SK-N-SH (cell line): ENCODE measurements at regions of chr1 and their contacts with region 1.

Region 1: GRCh38 chr1:226547754-226548191 is 791 bp upstream of the STUM start:
- DNase-seq: peak; percentile 87
- H3K4me3 ChIP-seq: peak overlapping the region in 1 of 2 experiments; percentile 39; a peak in 1 of 4 replicates
- H3K27ac ChIP-seq: no peak overlapping the region
- H3K4me1 ChIP-seq: peaks cover 10 to 24% of the 10 kb centered on the region in 2 experiments; a peak in 1 of 4 replicates
- H3K27me3 ChIP-seq: peaks cover 26% of the 10 kb centered on the region
- CTCF ChIP-seq: peak; percentile 91
- EP300 ChIP-seq: no peak
- RAD21 ChIP-seq: peak; percentile 89

Region 2: GRCh38 chr1:226482975-226483700 is 64.6 kb before region 1 on chr1:
- CTCF ChIA-PET with region 1: interaction called, 10 read pairs
- POLR2A ChIA-PET with region 1: no interaction called
- DNase-seq: peak; percentile 65
- H3K4me3 ChIP-seq: no peak overlapping the region
- H3K27ac ChIP-seq: no peak overlapping the region; a peak in 1 of 4 replicates
- H3K4me1 ChIP-seq: peaks cover 0 to 15% of the 10 kb centered on the region in 2 experiments; a peak in 1 of 4 replicates
- H3K27me3 ChIP-seq: peaks cover 11% of the 10 kb centered on the region; the same call in 1 of the 2 replicates
- CTCF ChIP-seq: no peak
- EP300 ChIP-seq: peak in 1 of 2 experiments; percentile 20; a peak in 1 of 4 replicates
- RAD21 ChIP-seq: no peak

Region 3: DNA sequence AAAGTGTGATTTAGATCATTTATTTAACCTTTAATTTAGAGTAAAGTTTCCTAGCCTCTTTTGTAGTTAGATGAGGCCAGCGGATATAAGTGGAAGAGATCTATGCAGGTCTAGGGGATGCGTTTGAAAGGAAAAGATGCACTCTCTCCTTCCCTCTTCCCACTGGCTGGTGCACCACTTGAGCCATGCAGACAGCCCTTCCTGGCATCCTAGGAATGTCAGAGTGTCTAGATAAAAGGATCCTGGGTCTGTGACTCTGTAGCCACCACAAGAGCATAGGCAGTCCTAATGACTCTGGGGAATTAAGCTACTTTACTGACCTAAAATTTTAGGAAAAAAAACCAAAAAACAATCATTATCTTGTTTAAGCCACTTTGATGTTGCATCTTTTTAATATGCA is 15.2 kb before region 1 on chr1:
- CTCF ChIA-PET with region 1: interaction called, 50 read pairs
- POLR2A ChIA-PET with region 1: no interaction called
- DNase-seq: no peak
- H3K4me3 ChIP-seq: no peak overlapping the region
- H3K27ac ChIP-seq: no peak overlapping the region
- H3K4me1 ChIP-seq: no peaks in the 10 kb centered on the region
- H3K27me3 ChIP-seq: peaks cover 9% of the 10 kb centered on the region; the same call in 1 of the 2 replicates
- CTCF ChIP-seq: no peak
- EP300 ChIP-seq: no peak
- RAD21 ChIP-seq: no peak

Region 4: GRCh38 chr1:226581645-226582330 is 34.0 kb after region 1 on chr1:
- CTCF ChIA-PET with region 1: interaction called, 12 read pairs
- POLR2A ChIA-PET with region 1: no interaction called
- DNase-seq: no peak
- H3K4me3 ChIP-seq: no peak overlapping the region
- H3K27ac ChIP-seq: no peak overlapping the region
- H3K4me1 ChIP-seq: no peaks in the 10 kb centered on the region
- H3K27me3 ChIP-seq: no peaks in the 10 kb centered on the region; the same call in 1 of the 2 replicates
- CTCF ChIP-seq: no peak
- EP300 ChIP-seq: no peak
- RAD21 ChIP-seq: no peak

Region 5: DNA sequence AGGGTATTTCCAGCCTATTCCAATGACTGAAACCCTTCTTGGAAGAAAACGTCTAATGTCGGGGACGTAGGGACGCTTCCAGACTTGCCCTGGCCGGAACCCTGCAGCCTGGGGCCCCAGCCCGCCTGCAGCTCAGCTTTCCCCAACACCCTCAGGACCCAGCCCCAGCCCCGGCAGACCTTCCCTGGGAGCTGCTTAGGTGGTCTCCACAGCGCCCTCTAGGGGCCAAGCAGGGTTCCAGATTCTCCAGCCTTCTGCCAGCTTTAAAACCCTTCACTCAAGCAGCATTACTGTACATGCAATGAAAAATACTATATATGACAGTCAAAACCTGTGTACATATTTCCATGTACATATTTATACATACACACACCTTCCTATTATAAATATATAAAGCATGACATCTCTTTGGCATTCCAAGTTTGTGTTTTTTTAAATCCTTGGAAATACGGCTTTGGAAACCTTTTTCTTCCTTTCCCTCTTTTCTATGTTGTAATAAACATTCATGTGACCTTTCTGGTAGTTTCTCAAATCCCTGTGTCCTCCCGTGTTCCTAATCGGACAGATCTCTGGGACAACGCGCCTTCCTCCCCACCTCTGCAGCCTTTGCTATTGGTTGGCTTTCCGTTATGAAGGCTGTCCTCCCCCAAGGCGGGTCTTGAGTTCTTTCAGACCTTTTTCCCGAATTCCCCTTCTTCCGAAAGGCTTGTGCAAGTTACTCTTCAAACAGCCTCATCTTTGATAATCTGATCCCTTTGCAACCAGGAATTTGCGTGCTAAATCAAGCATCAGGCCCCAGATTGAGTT is 61.1 kb after region 1 on chr1:
- CTCF ChIA-PET with region 1: interaction called, 49 read pairs
- POLR2A ChIA-PET with region 1: no interaction called
- DNase-seq: peak; percentile 84
- H3K4me3 ChIP-seq: no peak overlapping the region; a peak in 1 of 4 replicates
- H3K27ac ChIP-seq: no peak overlapping the region
- H3K4me1 ChIP-seq: no peaks in the 10 kb centered on the region; a peak in 1 of 4 replicates
- H3K27me3 ChIP-seq: no peaks in the 10 kb centered on the region; the same call in 1 of the 2 replicates
- CTCF ChIP-seq: peak; percentile 81
- EP300 ChIP-seq: no peak
- RAD21 ChIP-seq: peak; percentile 65